T-cell (primary cell): ENCODE measurements at regions of chr5 and their contacts with region 1.

Region 1: GRCh38 chr5:75473463-75473862 is 38.0 kb downstream of the CERT1 start:
- DNase-seq: no peak
- ATAC-seq: no peak
- H3K4me3 ChIP-seq: no peak overlapping the region
- H3K4me3 Mint-ChIP-seq: no peak overlapping the region
- H3K27ac ChIP-seq: no peak overlapping the region
- H3K27ac Mint-ChIP-seq: no peak overlapping the region
- H3K4me1 ChIP-seq: peaks cover 0 to under 1% of the 10 kb centered on the region in 2 experiments
- H3K4me1 Mint-ChIP-seq: peaks cover 20 to 34% (median 29%) of the 10 kb centered on the region in 3 donors
- H3K27me3 ChIP-seq: no peaks in the 10 kb centered on the region
- H3K27me3 Mint-ChIP-seq: no peaks in the 10 kb centered on the region

Region 2: DNA sequence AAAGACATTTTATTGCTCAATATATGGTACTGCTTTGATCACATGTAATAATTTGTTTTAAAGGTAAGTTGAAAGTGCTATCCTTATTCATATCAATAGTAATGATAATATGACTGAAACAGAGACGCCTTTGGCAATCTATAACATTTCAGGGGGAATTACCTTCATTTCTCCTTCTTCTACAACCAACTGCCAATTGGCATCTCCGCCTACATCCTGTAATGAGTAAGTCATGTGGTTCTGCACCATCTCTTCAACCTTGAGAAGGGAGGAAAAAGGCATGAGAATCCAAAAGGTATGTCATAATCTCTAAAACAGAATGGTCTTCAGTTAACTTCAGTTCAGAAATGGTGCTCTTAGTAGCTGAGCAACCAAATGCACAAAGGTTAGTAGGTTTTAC is 84.0 kb before region 1 on chr5:
- CTCF ChIA-PET with region 1: no interaction called
- POLR2A ChIA-PET with region 1: no interaction called
- DNase-seq: no peak
- ATAC-seq: no peak
- H3K4me3 ChIP-seq: no peak overlapping the region
- H3K4me3 Mint-ChIP-seq: no peak overlapping the region
- H3K27ac ChIP-seq: no peak overlapping the region
- H3K27ac Mint-ChIP-seq: no peak overlapping the region
- H3K4me1 ChIP-seq: no peaks in the 10 kb centered on the region
- H3K4me1 Mint-ChIP-seq: no peaks in the 10 kb centered on the region
- H3K27me3 ChIP-seq: no peaks in the 10 kb centered on the region
- H3K27me3 Mint-ChIP-seq: no peaks in the 10 kb centered on the region

Region 3: GRCh38 chr5:75484605-75485004 is 11.1 kb after region 1 on chr5:
- CTCF ChIA-PET with region 1: no interaction called
- POLR2A ChIA-PET with region 1: no interaction called
- DNase-seq: no peak
- ATAC-seq: no peak
- H3K4me3 ChIP-seq: no peak overlapping the region
- H3K4me3 Mint-ChIP-seq: no peak overlapping the region
- H3K27ac ChIP-seq: no peak overlapping the region
- H3K27ac Mint-ChIP-seq: no peak overlapping the region
- H3K4me1 ChIP-seq: no peaks in the 10 kb centered on the region
- H3K4me1 Mint-ChIP-seq: peaks cover 47 to 62% (median 50%) of the 10 kb centered on the region in 3 donors
- H3K27me3 ChIP-seq: no peaks in the 10 kb centered on the region
- H3K27me3 Mint-ChIP-seq: no peaks in the 10 kb centered on the region

Region 4: GRCh38 chr5:75729321-75729720 is 255.9 kb after region 1 on chr5:
- CTCF ChIA-PET with region 1: no interaction called
- POLR2A ChIA-PET with region 1: no interaction called
- DNase-seq: no peak
- ATAC-seq: no peak
- H3K4me3 ChIP-seq: no peak overlapping the region
- H3K4me3 Mint-ChIP-seq: no peak overlapping the region
- H3K27ac ChIP-seq: no peak overlapping the region
- H3K27ac Mint-ChIP-seq: no peak overlapping the region
- H3K4me1 ChIP-seq: no peaks in the 10 kb centered on the region
- H3K4me1 Mint-ChIP-seq: no peaks in the 10 kb centered on the region
- H3K27me3 ChIP-seq: no peaks in the 10 kb centered on the region
- H3K27me3 Mint-ChIP-seq: peaks cover 13 to 19% of the 10 kb centered on the region in 2 donors

Region 5: GRCh38 chr5:76379316-76379715 is 905.9 kb after region 1 on chr5:
- CTCF ChIA-PET with region 1: no interaction called
- POLR2A ChIA-PET with region 1: interaction called in 1 of 2 experiments, 12 read pairs
- DNase-seq: no peak
- ATAC-seq: peak in 3 of 4 experiments; percentile 52 to 70 (median 68)
- H3K4me3 ChIP-seq: no peak overlapping the region
- H3K4me3 Mint-ChIP-seq: no peak overlapping the region
- H3K27ac ChIP-seq: no peak overlapping the region
- H3K27ac Mint-ChIP-seq: peak overlapping the region in 1 of 2 donors; percentile 61
- H3K4me1 ChIP-seq: peaks cover 10 to 28% of the 10 kb centered on the region in 2 experiments
- H3K4me1 Mint-ChIP-seq: peaks cover 42 to 49% (median 48%) of the 10 kb centered on the region in 3 donors
- H3K27me3 ChIP-seq: no peaks in the 10 kb centered on the region
- H3K27me3 Mint-ChIP-seq: no peaks in the 10 kb centered on the region